PC-3 (cell line): ENCODE measurements at regions of chr1 and their contacts with region 1.

Region 1: GRCh38 chr1:115166531-115167091 is 77.3 kb upstream of the TSPAN2 start:
- DNase-seq: peak; percentile 53
- ATAC-seq: no peak
- H3K4me3 ChIP-seq: no peak overlapping the region
- H3K27ac ChIP-seq: no peak overlapping the region
- H3K4me1 ChIP-seq: peaks cover 40% of the 10 kb centered on the region
- H3K27me3 ChIP-seq: no peaks in the 10 kb centered on the region
- CTCF ChIP-seq: no peak

Region 2: GRCh38 chr1:115210302-115210711 is 43.7 kb after region 1 on chr1:
- CTCF ChIA-PET with region 1: no interaction called
- POLR2A ChIA-PET with region 1: no interaction called
- intact Hi-C with region 1: loop called (anchors 5 kb)
- DNase-seq: peak; percentile 97
- ATAC-seq: peak; percentile 83
- H3K4me3 ChIP-seq: no peak overlapping the region
- H3K27ac ChIP-seq: peak overlapping the region; percentile 89
- H3K4me1 ChIP-seq: peaks cover 49% of the 10 kb centered on the region
- H3K27me3 ChIP-seq: no peaks in the 10 kb centered on the region
- CTCF ChIP-seq: no peak

Region 3: DNA sequence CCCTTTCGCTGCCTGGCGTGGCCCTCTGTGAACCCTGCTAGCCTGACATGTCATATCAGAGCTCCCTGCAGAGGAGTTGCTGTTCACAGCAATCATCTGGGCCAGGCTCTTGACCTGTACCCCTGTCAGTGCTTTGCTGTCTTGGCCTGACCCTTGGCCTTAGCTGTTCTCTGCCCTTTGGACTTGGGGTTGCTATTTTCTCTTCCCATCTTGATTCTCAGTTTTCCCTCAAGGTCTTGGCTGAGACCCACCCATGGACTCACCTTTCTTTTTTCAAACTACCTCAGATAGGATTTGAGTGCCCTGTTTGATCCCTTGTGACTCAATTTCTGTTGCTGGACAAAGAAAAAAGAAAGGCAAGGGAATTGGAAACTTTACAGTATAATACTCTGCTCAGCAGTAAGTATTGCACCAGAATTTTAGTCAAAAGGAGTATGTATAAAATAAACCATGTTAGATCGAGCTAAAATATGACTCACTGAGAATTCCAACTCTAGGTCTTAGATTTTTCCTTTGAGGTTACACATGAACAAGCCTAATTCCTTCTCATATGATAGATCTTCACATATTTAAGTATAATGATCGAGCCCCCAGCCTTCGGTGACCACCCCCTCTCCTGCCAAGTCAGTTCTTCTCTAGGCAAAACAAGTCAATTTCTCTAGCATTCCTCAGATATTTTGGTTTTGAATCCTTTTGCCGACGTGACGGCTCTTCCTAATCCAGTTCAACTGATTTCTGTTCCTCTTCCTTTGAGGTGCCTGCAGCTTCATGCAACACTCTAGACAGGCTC is 60.9 kb after region 1 on chr1:
- CTCF ChIA-PET with region 1: no interaction called
- POLR2A ChIA-PET with region 1: no interaction called
- intact Hi-C with region 1: no loop called
- DNase-seq: no peak
- ATAC-seq: no peak
- H3K4me3 ChIP-seq: no peak overlapping the region
- H3K27ac ChIP-seq: no peak overlapping the region
- H3K4me1 ChIP-seq: peaks cover 44% of the 10 kb centered on the region
- H3K27me3 ChIP-seq: no peaks in the 10 kb centered on the region
- CTCF ChIP-seq: no peak

Region 4: DNA sequence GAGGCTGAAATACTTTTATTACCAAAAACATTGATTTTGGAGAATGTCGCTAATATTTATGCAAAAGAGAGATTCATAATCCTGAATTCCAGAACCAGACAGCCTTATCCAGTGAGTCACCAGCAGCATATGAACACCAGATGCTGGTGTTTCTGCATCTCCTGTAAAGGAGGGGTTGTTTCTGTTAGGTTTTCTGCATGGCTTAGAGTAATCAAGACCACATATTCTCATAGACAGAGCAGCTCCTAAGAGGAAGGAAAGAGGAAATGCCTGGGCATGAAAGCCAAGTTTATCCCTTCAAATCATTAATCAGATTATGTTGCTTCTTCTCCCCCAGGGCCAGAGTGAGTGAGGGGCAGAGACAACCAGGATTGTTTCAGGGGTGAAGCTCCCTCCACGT is 85.2 kb after region 1 on chr1:
- CTCF ChIA-PET with region 1: no interaction called
- POLR2A ChIA-PET with region 1: no interaction called
- intact Hi-C with region 1: no loop called
- DNase-seq: peak; percentile 18
- ATAC-seq: peak; percentile 65
- H3K4me3 ChIP-seq: no peak overlapping the region
- H3K27ac ChIP-seq: no peak overlapping the region
- H3K4me1 ChIP-seq: 0 out of 2 replicates have a peak, but pooled peaks cover 4% of the 10 kb centered on the region
- H3K27me3 ChIP-seq: no peaks in the 10 kb centered on the region
- CTCF ChIP-seq: no peak